ENCODE measurements at regions of chr11 and their contacts with region 1.

Region 1: GRCh38 chr11:14454861-14455632 is 44.6 kb downstream of the COPB1 start:
- DNase-seq: no peak
- ATAC-seq: peak; percentile 45

Region 2: GRCh38 chr11:14300661-14301304 is 154.3 kb before region 1 on chr11:
- intact Hi-C with region 1: loop called (anchors 2 kb)
- DNase-seq: no peak
- ATAC-seq: peak; percentile 91

Region 3: GRCh38 chr11:14373931-14374646 is 81.0 kb before region 1 on chr11:
- intact Hi-C with region 1: loop called (anchors 10 kb)
- DNase-seq: no peak
- ATAC-seq: peak; percentile 72

Region 4: DNA sequence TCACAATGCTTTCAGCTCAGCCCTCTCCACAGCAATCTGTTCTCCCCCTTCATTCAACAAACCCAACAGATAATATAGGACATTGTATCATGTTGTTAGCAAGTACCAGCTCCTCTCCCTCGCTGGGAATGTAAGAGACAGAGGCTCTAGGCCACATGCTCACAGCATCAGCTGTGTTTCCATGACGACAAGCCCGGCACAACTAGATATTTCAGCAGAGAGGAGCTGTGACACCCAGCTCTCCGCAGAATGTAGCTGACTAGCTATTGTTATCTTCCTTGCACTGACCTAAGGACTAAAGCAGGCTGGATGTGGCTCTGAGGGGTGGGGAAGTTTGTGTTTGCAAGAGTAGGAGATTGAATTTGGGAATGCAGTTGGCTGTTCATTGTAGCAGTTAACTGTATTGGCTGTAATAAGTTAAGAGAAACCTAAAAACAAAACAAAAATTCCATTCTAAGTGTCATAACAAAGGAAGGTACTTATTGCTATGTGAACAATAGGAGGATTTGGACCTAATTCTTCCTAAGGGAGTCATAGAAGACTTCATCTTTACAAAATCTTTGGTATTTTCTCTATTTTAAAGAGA is 68.1 kb before region 1 on chr11:
- intact Hi-C with region 1: no loop called
- DNase-seq: no peak
- ATAC-seq: peak; percentile 44